ENCODE measurements at regions of chr20 and their contacts with region 1.

Region 1: DNA sequence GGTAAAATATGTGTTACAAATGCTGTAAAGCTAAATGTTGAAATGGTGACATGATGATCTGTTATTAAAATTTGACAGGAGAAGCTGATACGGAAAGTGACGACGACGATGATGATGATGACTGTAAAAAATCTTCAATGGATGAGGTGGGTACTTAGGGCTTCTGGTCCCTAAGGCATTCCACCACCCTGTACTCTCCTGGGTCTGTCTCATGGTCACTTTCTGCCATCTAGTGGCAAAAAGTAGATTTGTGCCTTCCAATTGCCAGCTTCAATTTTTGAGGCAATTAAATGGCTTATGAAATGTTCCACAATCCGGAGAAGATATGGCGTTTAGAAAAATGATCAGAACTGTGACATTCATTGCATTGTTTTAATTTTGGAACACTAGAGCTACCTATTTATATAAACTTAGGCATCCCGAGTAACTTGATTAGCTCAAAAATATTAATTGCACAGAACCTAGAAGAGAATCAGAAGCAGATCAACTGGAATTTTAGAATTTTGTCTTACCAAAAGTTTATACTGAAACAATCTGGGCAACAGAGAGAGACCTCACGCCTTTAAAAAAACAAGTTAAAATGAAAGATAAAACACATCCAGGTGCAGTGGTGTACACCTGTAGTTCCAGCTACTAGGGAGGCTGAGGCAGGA is 346.5 kb upstream of the PLCB4 start:
- H3K4me3 ChIP-seq: no peak overlapping the region
- H3K27ac ChIP-seq: no peak overlapping the region
- H3K4me1 ChIP-seq: no peaks in the 10 kb centered on the region
- CTCF ChIP-seq: peak; percentile 54; the same call in 1 of the 2 replicates

Region 2: GRCh38 chr20:7935027-7935551 is 787.3 kb before region 1 on chr20:
- CTCF ChIA-PET with region 1: interaction called, 115 read pairs
- POLR2A ChIA-PET with region 1: no interaction called
- H3K4me3 ChIP-seq: no peak overlapping the region
- H3K27ac ChIP-seq: no peak overlapping the region
- H3K4me1 ChIP-seq: no peaks in the 10 kb centered on the region
- CTCF ChIP-seq: no peak

Region 3: DNA sequence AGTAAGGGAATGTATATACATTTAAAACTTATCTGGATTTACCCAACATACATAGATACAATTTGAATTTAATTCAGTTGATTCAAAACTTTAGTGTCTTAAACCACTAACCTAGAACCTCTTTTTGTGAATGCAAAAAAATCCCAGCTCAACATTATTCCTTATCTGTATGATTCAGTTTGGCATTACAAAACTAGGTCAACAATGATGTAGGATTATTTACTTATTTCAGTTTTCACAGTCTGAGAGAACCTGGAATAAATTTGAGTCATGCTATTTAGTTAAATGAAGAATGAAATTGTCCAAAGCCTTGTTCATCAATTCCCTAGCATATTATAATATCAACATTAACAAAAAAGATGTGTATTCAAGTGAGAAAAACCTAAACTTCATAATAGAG is 597.8 kb before region 1 on chr20:
- CTCF ChIA-PET with region 1: interaction called, 58 read pairs
- POLR2A ChIA-PET with region 1: no interaction called
- H3K4me3 ChIP-seq: no peak overlapping the region
- H3K27ac ChIP-seq: no peak overlapping the region
- H3K4me1 ChIP-seq: no peaks in the 10 kb centered on the region
- CTCF ChIP-seq: no peak

Region 4: DNA sequence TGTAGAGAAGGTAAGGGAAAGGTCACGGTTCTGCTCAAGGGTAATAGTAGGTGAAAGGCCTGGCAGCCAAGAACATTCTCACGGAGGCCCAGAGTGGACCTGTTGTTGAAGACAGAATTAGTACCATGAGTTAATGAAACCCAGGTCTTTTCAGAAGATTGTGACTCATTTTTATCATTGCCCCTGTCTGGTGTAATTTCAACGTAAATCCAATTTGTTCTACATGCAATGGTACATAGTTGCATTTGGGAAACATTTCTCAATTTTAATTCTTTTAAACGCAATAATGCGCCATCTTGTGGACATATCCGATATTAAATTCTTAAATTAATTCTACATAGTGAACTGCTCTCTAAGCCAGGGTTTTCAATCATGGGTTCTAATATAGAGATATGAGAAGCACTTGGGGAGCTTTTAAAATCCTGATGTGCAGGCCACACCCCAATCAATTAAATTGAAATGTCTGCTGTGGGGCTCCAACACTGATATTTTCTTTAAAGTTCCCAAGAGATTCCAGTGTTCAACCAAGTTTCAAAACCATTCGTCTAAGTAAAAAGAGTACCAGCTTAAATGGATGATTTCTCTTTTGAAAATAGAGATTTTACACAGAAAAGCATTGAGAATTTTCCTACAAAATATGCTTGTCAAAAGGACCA is 332.9 kb before region 1 on chr20:
- CTCF ChIA-PET with region 1: interaction called, 34 read pairs
- POLR2A ChIA-PET with region 1: no interaction called
- H3K4me3 ChIP-seq: no peak overlapping the region
- H3K27ac ChIP-seq: no peak overlapping the region
- H3K4me1 ChIP-seq: peaks cover 7% of the 10 kb centered on the region; the same call in 1 of the 2 replicates
- CTCF ChIP-seq: no peak

Region 5: GRCh38 chr20:8735674-8736073 is 13.3 kb after region 1 on chr20:
- CTCF ChIA-PET with region 1: interaction called, 18 read pairs
- POLR2A ChIA-PET with region 1: interaction called, 4 read pairs
- H3K4me3 ChIP-seq: no peak overlapping the region
- H3K27ac ChIP-seq: no peak overlapping the region
- H3K4me1 ChIP-seq: no peaks in the 10 kb centered on the region
- CTCF ChIP-seq: no peak

Region 6: DNA sequence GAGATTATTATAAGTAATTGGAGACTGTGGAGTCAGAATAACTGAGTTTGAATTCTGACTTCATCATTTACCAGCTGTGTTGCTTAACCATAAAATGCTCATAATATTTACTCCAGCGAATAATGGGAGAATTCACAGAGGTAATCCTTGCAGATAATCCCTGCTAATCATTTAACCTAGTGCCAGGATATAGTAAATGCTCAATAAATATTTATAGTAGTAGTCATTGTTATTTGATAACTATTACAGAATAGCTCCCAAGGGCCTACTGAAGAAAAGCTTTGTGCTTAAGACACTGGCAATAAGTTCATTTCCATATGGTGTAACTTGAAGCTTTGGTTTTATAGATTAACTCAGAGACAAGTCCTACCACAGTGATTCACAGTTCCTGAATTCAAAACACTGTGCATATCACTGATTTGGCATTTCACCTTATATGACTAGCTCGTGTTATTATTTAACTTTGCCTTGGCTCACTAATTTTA is 137.7 kb after region 1 on chr20:
- CTCF ChIA-PET with region 1: no interaction called
- POLR2A ChIA-PET with region 1: no interaction called
- H3K4me3 ChIP-seq: no peak overlapping the region
- H3K27ac ChIP-seq: no peak overlapping the region
- H3K4me1 ChIP-seq: no peaks in the 10 kb centered on the region
- CTCF ChIP-seq: no peak